Right ventricle myocardium superior (tissue), 1 donor: ENCODE measurements at regions of chr1 and their contacts with region 1.

Region 1: GRCh38 chr1:14924455-14925331 is 228.9 kb upstream of the TMEM51 start:
- DNase-seq: peak; percentile 66
- ATAC-seq: peak; percentile 71

Region 2: DNA sequence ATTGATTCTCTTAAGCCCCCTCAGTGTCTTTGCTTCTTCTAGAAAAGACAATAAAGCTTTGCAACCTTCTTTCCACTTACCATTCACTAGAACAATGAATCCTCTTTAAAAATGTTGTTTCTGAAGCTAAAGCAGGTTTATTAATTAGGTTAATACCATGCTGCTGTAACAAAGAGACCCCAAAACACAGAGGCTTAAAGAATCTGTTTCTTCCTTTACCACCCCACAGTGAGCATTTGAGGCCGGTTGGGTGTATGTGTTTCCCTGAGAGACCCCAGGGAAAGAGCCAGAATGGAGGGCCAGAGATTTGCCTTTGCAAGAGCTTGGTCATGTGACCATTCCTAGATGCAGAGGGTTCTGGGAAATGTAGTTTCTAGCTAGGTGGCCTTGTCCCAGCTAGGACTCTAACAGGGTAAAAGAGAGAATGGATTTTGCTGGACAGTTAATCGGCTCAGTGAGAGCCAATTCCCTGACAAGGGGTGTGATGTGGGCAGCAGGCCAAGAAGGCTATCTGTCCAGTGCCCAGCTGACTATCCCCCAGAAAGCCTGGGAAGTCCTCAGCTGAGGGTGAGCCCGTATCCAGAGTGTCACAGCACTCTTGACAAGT is 37.1 kb after region 1 on chr1:
- intact Hi-C with region 1: no loop called
- DNase-seq: no peak
- ATAC-seq: no peak

Region 3: DNA sequence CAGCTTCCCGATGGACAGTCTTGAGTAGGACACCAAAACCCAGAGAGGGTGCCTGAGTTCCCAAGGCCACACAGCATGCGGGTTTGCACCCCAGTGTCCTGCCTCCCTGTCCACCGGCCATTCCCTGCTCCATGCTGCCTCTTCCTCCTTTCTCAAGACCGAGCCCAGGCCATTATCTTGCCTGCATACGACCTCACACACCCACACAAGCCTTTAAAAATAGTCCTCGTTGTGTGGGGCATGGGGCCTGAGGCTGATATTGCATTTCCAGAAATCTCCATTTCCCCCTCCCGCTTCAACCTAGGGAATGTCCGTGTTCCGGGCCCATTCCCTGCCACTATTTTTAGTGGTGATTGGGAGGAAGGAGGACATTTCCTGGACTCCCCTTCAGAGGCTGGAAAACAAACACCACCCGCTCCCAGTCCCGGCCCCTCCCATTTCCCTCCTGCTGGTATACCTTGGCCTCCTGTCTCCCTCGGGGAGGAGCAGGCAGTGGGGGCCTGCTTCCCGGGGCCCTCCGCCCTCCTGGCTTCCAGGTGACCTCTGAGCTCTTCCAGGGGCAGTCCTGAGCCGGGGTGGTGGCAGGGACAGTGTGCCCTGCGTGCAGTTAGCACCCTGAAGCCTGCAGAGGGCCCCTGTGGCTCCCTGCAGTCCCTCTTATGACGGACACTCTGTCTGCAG is 96.5 kb after region 1 on chr1:
- intact Hi-C with region 1: loop called (anchors 5 kb)
- DNase-seq: peak; percentile 58
- ATAC-seq: peak; percentile 41

Region 4: GRCh38 chr1:16396591-16396990 is 1471.9 kb after region 1 on chr1:
- intact Hi-C with region 1: no loop called
- DNase-seq: peak; percentile 64
- ATAC-seq: no peak